Activated naive CD4-positive, alpha-beta T cell treated with anti-CD3 and anti-CD28 coated beads for 36 hours (primary cell): ENCODE measurements at regions of chr15 and their contacts with region 1.

Region 1: GRCh38 chr15:62770752-62771151 is 271.8 kb upstream of the TPM1 start:
- DNase-seq: no peak
- H3K4me3 Mint-ChIP-seq: no peak overlapping the region
- H3K27ac Mint-ChIP-seq: no peak overlapping the region
- H3K4me1 Mint-ChIP-seq: no peaks in the 10 kb centered on the region
- H3K27me3 Mint-ChIP-seq: no peaks in the 10 kb centered on the region

Region 2: GRCh38 chr15:63107895-63108546 is 337.3 kb after region 1 on chr15:
- CTCF ChIA-PET with region 1: interaction called, 10 read pairs
- intact Hi-C with region 1: no loop called
- DNase-seq: no peak
- H3K4me3 Mint-ChIP-seq: no peak overlapping the region
- H3K27ac Mint-ChIP-seq: no peak overlapping the region
- H3K4me1 Mint-ChIP-seq: no peaks in the 10 kb centered on the region
- H3K27me3 Mint-ChIP-seq: peaks cover 11% of the 10 kb centered on the region